ENCODE measurements at regions of chr2 and their contacts with region 1.

Region 1: GRCh38 chr2:36461039-36461681 is 105.6 kb downstream of the CRIM1 start:
- DNase-seq: peak; percentile 90
- H3K4me3 ChIP-seq: no peak overlapping the region
- H3K27ac ChIP-seq: peak overlapping the region; percentile 79
- H3K4me1 ChIP-seq: peaks cover 69% of the 10 kb centered on the region
- H3K27me3 ChIP-seq: no peaks in the 10 kb centered on the region
- CTCF ChIP-seq: no peak

Region 2: GRCh38 chr2:36277146-36277808 is 183.9 kb before region 1 on chr2:
- CTCF ChIA-PET with region 1: no interaction called
- POLR2A ChIA-PET with region 1: no interaction called
- intact Hi-C with region 1: loop called (anchors 10 kb)
- DNase-seq: no peak
- H3K4me3 ChIP-seq: no peak overlapping the region
- H3K27ac ChIP-seq: no peak overlapping the region
- H3K4me1 ChIP-seq: no peaks in the 10 kb centered on the region
- H3K27me3 ChIP-seq: no peaks in the 10 kb centered on the region
- CTCF ChIP-seq: no peak

Region 3: GRCh38 chr2:36403675-36404230 is 57.4 kb before region 1 on chr2:
- CTCF ChIA-PET with region 1: interaction called, 3 read pairs
- POLR2A ChIA-PET with region 1: no interaction called
- intact Hi-C with region 1: loop called (anchors 2 kb)
- DNase-seq: peak; percentile 88
- H3K4me3 ChIP-seq: peak overlapping the region; percentile 14
- H3K27ac ChIP-seq: no peak overlapping the region
- H3K4me1 ChIP-seq: peaks cover 38% of the 10 kb centered on the region
- H3K27me3 ChIP-seq: no peaks in the 10 kb centered on the region
- CTCF ChIP-seq: no peak

Region 4: GRCh38 chr2:36507408-36507812 is 46.2 kb after region 1 on chr2:
- CTCF ChIA-PET with region 1: no interaction called
- POLR2A ChIA-PET with region 1: no interaction called
- intact Hi-C with region 1: loop called (anchors 5 kb)
- DNase-seq: peak; percentile 84
- H3K4me3 ChIP-seq: no peak overlapping the region
- H3K27ac ChIP-seq: no peak overlapping the region
- H3K4me1 ChIP-seq: no peaks in the 10 kb centered on the region
- H3K27me3 ChIP-seq: no peaks in the 10 kb centered on the region
- CTCF ChIP-seq: peak; percentile 91

Measured in A673 (cell line).